Activated CD4-positive, alpha-beta T cell treated with anti-CD3 and anti-CD28 coated beads, Interleukin-2, amount 10 ng/mL, durations not matched to agents 7 days and 5 days (primary cell): ENCODE measurements at regions of chr12 and their contacts with region 1.

Region 1: DNA sequence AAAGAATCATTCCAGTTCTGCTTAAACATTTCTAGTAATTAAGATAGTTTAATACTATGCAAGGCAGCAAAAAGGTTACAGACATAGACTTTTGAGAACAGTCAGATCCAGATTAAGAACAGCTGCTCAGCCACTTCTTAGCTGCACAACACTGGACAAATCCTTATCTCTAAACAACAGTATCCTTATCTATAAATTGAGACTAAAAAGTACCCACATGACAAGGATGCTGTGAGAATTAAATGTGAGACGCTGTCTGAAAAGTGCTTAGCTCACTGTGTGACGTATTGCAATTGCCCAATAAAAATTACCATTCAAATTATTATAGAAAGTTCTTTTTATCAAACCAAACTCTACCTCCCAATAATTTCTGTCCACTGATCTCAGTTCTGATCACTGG is 35.5 kb downstream of the BORCS5 start:
- DNase-seq: no peak
- H3K4me3 Mint-ChIP-seq: no peak overlapping the region
- H3K27ac Mint-ChIP-seq: no peak overlapping the region
- H3K4me1 Mint-ChIP-seq: peaks cover 19% of the 10 kb centered on the region
- H3K27me3 Mint-ChIP-seq: no peaks in the 10 kb centered on the region

Region 2: GRCh38 chr12:11513288-11513687 is 879.1 kb before region 1 on chr12:
- CTCF ChIA-PET with region 1: no interaction called
- POLR2A ChIA-PET with region 1: no interaction called
- DNase-seq: no peak
- H3K4me3 Mint-ChIP-seq: no peak overlapping the region
- H3K27ac Mint-ChIP-seq: no peak overlapping the region
- H3K4me1 Mint-ChIP-seq: no peaks in the 10 kb centered on the region
- H3K27me3 Mint-ChIP-seq: peaks cover 1% of the 10 kb centered on the region

Region 3: DNA sequence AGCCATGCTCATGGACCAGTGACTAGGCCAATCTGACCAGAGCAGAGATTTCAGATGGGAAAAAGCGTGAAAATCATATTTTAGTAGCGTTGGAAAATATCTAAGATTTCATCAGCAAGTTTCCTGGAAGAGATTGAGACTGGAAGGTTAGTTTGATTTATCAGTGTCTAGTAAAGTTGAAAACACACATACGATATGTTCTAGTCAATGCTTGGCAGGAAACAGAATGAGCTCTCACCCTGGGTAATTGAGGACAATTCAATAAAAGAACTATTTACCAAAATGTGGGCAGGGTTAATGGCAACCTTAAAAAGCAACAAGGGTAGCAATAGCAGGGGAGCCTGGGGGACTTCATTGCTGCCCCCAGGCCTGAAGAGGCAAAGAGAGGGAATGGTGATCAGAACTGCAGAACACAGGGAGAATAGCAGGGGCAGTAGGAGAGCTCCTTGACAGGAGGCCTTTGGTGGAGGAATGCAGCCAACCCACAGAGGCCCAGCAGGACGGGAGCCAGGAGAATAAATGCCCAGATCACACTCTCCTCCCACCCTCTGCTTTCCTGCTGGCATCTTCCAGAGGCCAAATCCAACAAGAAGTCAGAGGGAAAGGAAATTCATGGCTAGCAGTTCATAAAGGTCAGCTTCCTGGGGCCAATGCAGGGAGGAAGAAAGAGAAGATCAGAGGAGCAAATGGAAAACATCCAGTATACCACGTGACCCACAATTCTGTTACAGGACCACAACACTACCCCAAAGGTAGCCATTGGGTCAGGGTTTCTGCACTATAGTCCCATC is 98.0 kb before region 1 on chr12:
- CTCF ChIA-PET with region 1: no interaction called
- POLR2A ChIA-PET with region 1: no interaction called
- DNase-seq: no peak
- H3K4me3 Mint-ChIP-seq: no peak overlapping the region
- H3K27ac Mint-ChIP-seq: no peak overlapping the region
- H3K4me1 Mint-ChIP-seq: no peaks in the 10 kb centered on the region
- H3K27me3 Mint-ChIP-seq: peaks cover 6% of the 10 kb centered on the region

Region 4: GRCh38 chr12:12403264-12404248 is 11.1 kb after region 1 on chr12:
- CTCF ChIA-PET with region 1: interaction called, 16 read pairs
- POLR2A ChIA-PET with region 1: no interaction called
- DNase-seq: no peak
- H3K4me3 Mint-ChIP-seq: no peak overlapping the region
- H3K27ac Mint-ChIP-seq: peak overlapping the region; percentile 2
- H3K4me1 Mint-ChIP-seq: peaks cover 30% of the 10 kb centered on the region
- H3K27me3 Mint-ChIP-seq: no peaks in the 10 kb centered on the region

Region 5: GRCh38 chr12:12628013-12628412 is 235.6 kb after region 1 on chr12:
- CTCF ChIA-PET with region 1: no interaction called
- POLR2A ChIA-PET with region 1: no interaction called
- DNase-seq: no peak
- H3K4me3 Mint-ChIP-seq: no peak overlapping the region
- H3K27ac Mint-ChIP-seq: no peak overlapping the region
- H3K4me1 Mint-ChIP-seq: peaks cover 41% of the 10 kb centered on the region
- H3K27me3 Mint-ChIP-seq: no peaks in the 10 kb centered on the region

Region 6: GRCh38 chr12:12779529-12779928 is 387.1 kb after region 1 on chr12:
- CTCF ChIA-PET with region 1: no interaction called
- POLR2A ChIA-PET with region 1: no interaction called
- DNase-seq: no peak
- H3K4me3 Mint-ChIP-seq: no peak overlapping the region
- H3K27ac Mint-ChIP-seq: no peak overlapping the region
- H3K4me1 Mint-ChIP-seq: peaks cover 4% of the 10 kb centered on the region
- H3K27me3 Mint-ChIP-seq: no peaks in the 10 kb centered on the region